ENCODE measurements at regions of chr1 and their contacts with region 1.

Region 1: GRCh38 chr1:159798893-159799292 is 3.3 kb upstream of the FCRL6 start:
- DNase-seq: peak in 37 of 42 donors; percentile 23 to 84 (median 62)

Region 2: GRCh38 chr1:159891275-159892157 is 92.6 kb after region 1 on chr1:
- intact Hi-C with region 1: loop called (anchors 5 kb)
- DNase-seq: peak; percentile 65 to 92 (median 85)

Measured in head of caudate nucleus (tissue), 42 donors.